Gastrocnemius medialis (tissue), 4 donors: ENCODE measurements at regions of chr14 and their contacts with region 1.

Region 1: GRCh38 chr14:64465191-64465822 is at the start of gene AKAP5:
- DNase-seq: peak in 1 of 2 donors; percentile 3
- ATAC-seq: peak; percentile 52 to 65
- H3K4me3 ChIP-seq: peak within 1 kb of the TSS; percentile 56 to 84 (median 76)
- H3K27ac ChIP-seq: peak within 1 kb of the TSS in 3 of 4 donors; percentile 27 to 40 (median 35)
- H3K4me1 ChIP-seq: peaks cover 6 to 13% of the 10 kb centered on the region in 2 donors
- H3K27me3 ChIP-seq: no peaks in the 10 kb centered on the region
- CTCF ChIP-seq: no peak
- POLR2A ChIP-seq: no peak
- total RNA-seq, gene AKAP5: 0.04 to 0.87 (median 0.42) TPM

Region 2: DNA sequence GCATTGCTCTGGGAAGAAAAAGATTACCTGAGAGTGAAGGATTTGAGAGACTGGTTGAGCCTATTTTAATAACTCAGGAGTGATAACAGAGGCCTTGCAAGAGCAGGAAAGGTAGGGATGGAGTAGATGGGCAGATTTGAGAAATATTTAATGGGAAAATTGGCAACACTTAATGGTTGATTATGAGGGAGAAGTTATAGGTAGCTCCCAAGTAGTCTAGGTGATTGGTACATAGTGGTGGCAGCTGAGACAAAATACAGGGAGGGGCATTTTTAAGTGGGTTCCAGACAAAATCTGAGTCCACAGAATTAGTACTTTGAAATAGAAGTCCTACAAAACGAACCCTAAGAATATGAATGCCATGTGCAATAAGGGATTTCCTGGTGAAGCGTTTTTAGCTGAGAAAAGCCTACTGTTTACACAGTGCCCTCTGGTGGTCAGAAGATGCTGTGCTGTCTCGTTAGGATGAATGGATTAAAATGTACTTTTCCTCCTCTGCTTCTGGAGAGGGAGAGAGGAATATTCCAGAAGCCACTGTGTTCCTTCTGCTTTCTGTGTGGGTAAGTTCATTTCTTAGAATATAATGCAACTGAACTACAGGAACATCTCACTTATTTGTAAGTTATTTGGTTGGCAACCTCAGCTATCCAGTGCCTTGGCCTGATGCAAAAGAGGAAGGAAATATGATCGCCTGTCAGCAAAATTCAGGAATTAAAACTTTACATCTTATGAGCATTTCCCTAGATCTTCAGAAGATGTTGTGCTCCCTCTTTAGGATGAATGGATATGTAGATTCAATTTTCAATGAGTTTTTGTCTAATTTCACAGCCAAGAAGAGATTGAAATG is 45.7 kb after region 1 on chr14:
- in situ Hi-C with region 1: no loop called
- intact Hi-C with region 1: loop called (anchors 2 kb)
- DNase-seq: peak; percentile 37 to 54
- ATAC-seq: peak; percentile 57 to 72
- H3K4me3 ChIP-seq: no peak overlapping the region
- H3K27ac ChIP-seq: peak overlapping the region; percentile 42 to 99 (median 66)
- H3K4me1 ChIP-seq: peaks cover 54 to 81% of the 10 kb centered on the region in 2 donors
- H3K27me3 ChIP-seq: no peaks in the 10 kb centered on the region
- CTCF ChIP-seq: peak; percentile 68 to 90 (median 83)
- POLR2A ChIP-seq: no peak